Lower leg skin (tissue), 4 donors: ENCODE measurements at regions of chr10 and their contacts with region 1.

Region 1: GRCh38 chr10:70619271-70620019 is 16.9 kb upstream of the PRF1 start:
- DNase-seq: no peak
- H3K4me3 ChIP-seq: no peak overlapping the region
- CTCF ChIP-seq: no peak
- POLR2A ChIP-seq: no peak

Region 2: GRCh38 chr10:70197235-70197945 is 422.1 kb before region 1 on chr10:
- intact Hi-C with region 1: loop called (anchors 5 kb)
- DNase-seq: no peak
- H3K4me3 ChIP-seq: no peak overlapping the region
- CTCF ChIP-seq: no peak
- POLR2A ChIP-seq: no peak

Region 3: GRCh38 chr10:70528726-70529362 is 90.6 kb before region 1 on chr10:
- intact Hi-C with region 1: no loop called
- DNase-seq: no peak
- H3K4me3 ChIP-seq: no peak overlapping the region
- CTCF ChIP-seq: no peak
- POLR2A ChIP-seq: no peak